ENCODE measurements at regions of chr15 and their contacts with region 1.

Region 1: DNA sequence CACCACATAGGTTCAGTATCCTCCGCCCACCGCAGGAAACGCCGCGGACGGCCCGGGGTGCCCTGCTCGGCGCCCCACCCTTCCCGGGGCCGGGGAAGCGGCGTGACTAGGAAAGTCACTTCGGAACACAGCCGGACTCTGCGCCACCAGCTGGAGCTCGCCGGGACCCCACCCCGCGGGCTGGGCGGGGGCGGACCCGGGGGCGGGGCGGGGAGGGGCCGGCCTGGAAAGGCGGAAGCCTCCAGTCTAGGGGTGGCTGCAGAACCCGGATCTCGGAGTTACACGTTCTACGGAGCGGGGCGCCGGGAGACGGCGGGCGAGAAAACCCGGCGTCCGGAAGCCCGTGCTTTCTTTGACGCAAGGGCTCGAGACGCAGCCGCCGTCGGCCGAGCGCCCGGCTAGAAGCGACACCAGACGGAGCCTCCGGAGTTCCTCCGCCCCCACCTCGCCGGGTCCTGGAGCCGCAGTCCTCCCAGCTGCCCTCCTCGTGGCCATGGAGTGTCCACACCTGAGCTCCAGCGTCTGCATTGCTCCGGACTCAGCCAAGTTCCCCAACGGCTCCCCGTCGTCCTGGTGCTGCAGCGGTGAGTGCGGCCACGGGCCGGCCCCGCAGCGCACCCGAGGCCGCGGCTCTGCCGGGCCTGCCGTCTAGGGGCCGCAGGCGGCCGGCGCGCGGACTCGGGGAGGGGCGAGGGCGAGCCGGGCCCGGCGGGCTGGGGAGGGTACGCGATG is at the start of gene USP3:
- DNase-seq: peak; percentile 93 to 95 (median 94)
- H3K4me3 ChIP-seq: peak within 1 kb of the TSS; percentile 92 to 96 (median 94)
- H3K4me3 Mint-ChIP-seq: peak within 1 kb of the TSS; percentile 96
- H3K27ac ChIP-seq: peak within 1 kb of the TSS; percentile 98 to 100
- H3K27ac Mint-ChIP-seq: peak within 1 kb of the TSS; percentile 90 to 96 (median 93)
- H3K4me1 ChIP-seq: peaks cover 76 to 83% of the 10 kb centered on the region in 2 donors
- H3K4me1 Mint-ChIP-seq: peaks cover 71% of the 10 kb centered on the region
- H3K27me3 ChIP-seq: no peaks in the 10 kb centered on the region
- H3K27me3 Mint-ChIP-seq: peaks cover 0 to 4% (median 0%) of the 10 kb centered on the region in 3 donors
- CTCF ChIP-seq: peak; percentile 53
- polyA plus RNA-seq, gene USP3: 91.4 to 167 (median 122) TPM

Region 2: GRCh38 chr15:63466378-63467192 is 37.8 kb before region 1 on chr15:
- intact Hi-C with region 1: loop called (anchors 5 kb)
- DNase-seq: peak; percentile 72 to 78 (median 74)
- H3K4me3 ChIP-seq: no peak overlapping the region
- H3K4me3 Mint-ChIP-seq: no peak overlapping the region
- H3K27ac ChIP-seq: no peak overlapping the region
- H3K27ac Mint-ChIP-seq: peak overlapping the region in 3 of 7 donors; percentile 42 to 79 (median 58)
- H3K4me1 ChIP-seq: peaks cover 10 to 13% of the 10 kb centered on the region in 2 donors
- H3K4me1 Mint-ChIP-seq: peaks cover 18% of the 10 kb centered on the region
- H3K27me3 ChIP-seq: no peaks in the 10 kb centered on the region
- H3K27me3 Mint-ChIP-seq: peaks cover 1 to 4% (median 3%) of the 10 kb centered on the region in 3 donors
- CTCF ChIP-seq: peak; percentile 73

Region 3: GRCh38 chr15:63491116-63491827 is 13.1 kb before region 1 on chr15:
- intact Hi-C with region 1: loop called (anchors 1 to 2 kb)
- DNase-seq: peak; percentile 90 to 96 (median 94)
- H3K4me3 ChIP-seq: peak overlapping the region in 2 of 3 experiments; percentile 31 to 83
- H3K4me3 Mint-ChIP-seq: peak overlapping the region; percentile 52 to 90
- H3K27ac ChIP-seq: peak overlapping the region; percentile 95 to 100
- H3K27ac Mint-ChIP-seq: peak overlapping the region in 5 of 7 donors; percentile 98 to 100 (median 99)
- H3K4me1 ChIP-seq: peaks cover 99 to 100% of the 10 kb centered on the region in 2 donors
- H3K4me1 Mint-ChIP-seq: peaks cover 91% of the 10 kb centered on the region
- H3K27me3 ChIP-seq: no peaks in the 10 kb centered on the region
- H3K27me3 Mint-ChIP-seq: peaks cover 0 to 9% (median 0%) of the 10 kb centered on the region in 3 donors
- CTCF ChIP-seq: no peak

Region 4: GRCh38 chr15:63544258-63545026 is 40.0 kb after region 1 on chr15:
- intact Hi-C with region 1: loop called in 1 of 2 experiments (anchors 5 kb)
- DNase-seq: peak; percentile 53 to 83 (median 67)
- H3K4me3 ChIP-seq: peak overlapping the region; percentile 16 to 62 (median 19)
- H3K4me3 Mint-ChIP-seq: peak overlapping the region; percentile 34 to 79
- H3K27ac ChIP-seq: peak overlapping the region in 1 of 2 donors; percentile 68
- H3K27ac Mint-ChIP-seq: peak overlapping the region; percentile 49 to 91 (median 80)
- H3K4me1 ChIP-seq: peaks cover 33 to 47% of the 10 kb centered on the region in 2 donors
- H3K4me1 Mint-ChIP-seq: peaks cover 46% of the 10 kb centered on the region
- H3K27me3 ChIP-seq: no peaks in the 10 kb centered on the region
- H3K27me3 Mint-ChIP-seq: no peaks in the 10 kb centered on the region
- CTCF ChIP-seq: no peak

Region 5: DNA sequence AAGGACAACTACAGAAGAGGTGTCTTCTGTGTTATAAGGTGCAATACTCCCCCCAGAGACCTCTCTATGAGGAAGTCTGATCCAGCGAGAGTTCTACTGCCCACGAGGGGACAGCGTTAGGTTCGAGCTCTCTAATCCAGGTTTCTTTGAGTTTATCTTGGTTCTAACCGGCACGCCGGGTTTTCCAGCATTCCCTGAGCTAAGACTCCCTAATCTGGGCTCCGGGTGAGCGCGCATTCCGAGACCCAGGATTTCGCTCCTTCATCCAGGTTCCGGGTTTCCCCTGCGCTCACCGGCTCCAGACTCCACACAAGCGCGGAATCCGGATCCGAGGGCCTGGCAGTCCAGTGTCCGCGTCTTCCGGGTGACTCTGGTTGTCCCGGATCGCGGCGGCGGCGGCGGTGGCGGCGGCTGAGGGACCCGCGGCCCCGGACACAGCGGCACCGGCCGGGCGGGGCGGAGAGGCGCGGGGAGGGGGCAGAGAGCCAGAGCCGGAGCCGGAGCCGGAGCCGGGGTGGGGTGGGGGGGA is 955.9 kb after region 1 on chr15 and contains the start of gene ZNF609:
- intact Hi-C with region 1: loop called in 1 of 2 experiments (anchors 5 kb)
- DNase-seq: peak; percentile 74 to 80 (median 79)
- H3K4me3 ChIP-seq: peak within 1 kb of the TSS; percentile 61 to 98 (median 83)
- H3K4me3 Mint-ChIP-seq: peak within 1 kb of the TSS; percentile 90 to 97
- H3K27ac ChIP-seq: peak within 1 kb of the TSS; percentile 12 to 72
- H3K27ac Mint-ChIP-seq: peak within 1 kb of the TSS; percentile 78 to 93 (median 87)
- H3K4me1 ChIP-seq: peaks cover 50 to 73% of the 10 kb centered on the region in 2 donors
- H3K4me1 Mint-ChIP-seq: peaks cover 79% of the 10 kb centered on the region
- H3K27me3 ChIP-seq: no peaks in the 10 kb centered on the region
- H3K27me3 Mint-ChIP-seq: no peaks in the 10 kb centered on the region
- CTCF ChIP-seq: no peak
- polyA plus RNA-seq, gene ZNF609: 1.3 to 13.2 (median 1.7) TPM

Measured in CD14-positive monocyte (primary cell).